PC-9 (cell line): ENCODE measurements at regions of chr7 and their contacts with region 1.

Region 1: DNA sequence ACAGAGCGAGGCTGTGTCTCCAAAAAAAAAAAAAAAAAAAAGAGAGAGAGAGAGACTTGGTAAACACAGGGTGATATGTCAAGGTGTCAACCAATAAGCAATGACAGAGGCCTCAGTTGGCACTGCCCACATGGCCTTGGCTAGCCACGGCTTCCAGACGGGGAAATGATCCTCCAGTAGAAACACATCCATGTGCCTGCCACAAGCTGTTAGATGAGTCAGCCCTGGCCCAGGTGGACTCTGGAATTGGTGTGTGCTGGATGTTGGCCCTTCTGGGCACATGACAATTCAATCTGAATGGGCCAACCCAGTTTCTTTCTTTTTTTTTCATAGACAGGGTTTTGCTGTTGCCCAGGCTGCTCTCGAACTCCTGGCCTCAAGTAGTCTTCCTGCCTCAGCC is 13.7 kb downstream of the RFC2 start:
- DNase-seq: no peak
- H3K4me3 ChIP-seq: no peak overlapping the region
- H3K27ac ChIP-seq: no peak overlapping the region
- H3K4me1 ChIP-seq: no peaks in the 10 kb centered on the region
- H3K27me3 ChIP-seq: no peaks in the 10 kb centered on the region
- CTCF ChIP-seq: no peak

Region 2: GRCh38 chr7:74061840-74062539 is 178.5 kb before region 1 on chr7:
- CTCF ChIA-PET with region 1: no interaction called
- POLR2A ChIA-PET with region 1: no interaction called
- intact Hi-C with region 1: no loop called
- DNase-seq: peak; percentile 64 to 90
- H3K4me3 ChIP-seq: no peak overlapping the region
- H3K27ac ChIP-seq: no peak overlapping the region
- H3K4me1 ChIP-seq: peaks cover 17% of the 10 kb centered on the region
- H3K27me3 ChIP-seq: 0 out of 2 replicates have a peak, but pooled peaks cover 2% of the 10 kb centered on the region
- CTCF ChIP-seq: no peak

Region 3: DNA sequence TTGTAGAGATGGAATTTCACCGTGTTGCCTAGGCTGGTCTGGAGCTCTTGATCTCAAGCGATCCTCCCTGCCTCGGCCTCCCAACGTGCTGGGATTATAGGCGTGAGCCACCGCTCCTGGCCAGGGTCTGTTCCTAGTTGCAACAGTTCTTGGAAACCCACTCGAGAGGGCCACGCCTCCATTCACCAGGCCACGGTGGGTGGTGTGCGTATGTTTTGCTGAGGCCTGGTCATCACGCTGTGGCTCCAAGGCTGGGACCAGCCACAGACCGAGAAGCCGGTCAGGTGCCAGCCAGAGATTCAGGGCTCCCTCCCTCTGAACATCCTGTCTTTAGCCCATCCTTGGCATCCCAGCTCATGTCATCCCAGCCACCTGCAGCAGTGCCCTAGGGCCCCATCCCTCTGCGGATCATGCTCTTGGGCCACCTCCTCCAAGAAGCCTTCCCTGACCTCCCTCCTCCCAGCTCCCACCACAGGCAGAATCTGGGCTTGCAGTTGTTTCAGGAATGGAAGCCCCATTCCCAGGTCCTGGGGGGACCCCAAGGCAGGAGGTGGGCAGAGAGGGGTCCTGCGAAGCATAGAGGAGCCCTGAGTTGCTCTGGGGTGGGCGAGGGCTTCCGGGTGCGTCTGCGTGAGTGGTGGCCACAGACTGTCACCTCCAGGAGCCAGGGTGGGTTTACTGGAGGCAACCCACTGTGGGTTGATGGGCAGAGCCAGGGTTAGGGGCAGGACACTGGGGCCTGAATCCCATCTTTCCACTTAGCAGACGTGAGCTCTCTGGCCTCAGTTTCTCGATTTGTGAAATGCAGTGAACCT is 25.5 kb before region 1 on chr7:
- CTCF ChIA-PET with region 1: no interaction called
- POLR2A ChIA-PET with region 1: interaction called, 24 read pairs
- intact Hi-C with region 1: no loop called
- DNase-seq: no peak
- H3K4me3 ChIP-seq: no peak overlapping the region
- H3K27ac ChIP-seq: no peak overlapping the region
- H3K4me1 ChIP-seq: peaks cover 5% of the 10 kb centered on the region
- H3K27me3 ChIP-seq: no peaks in the 10 kb centered on the region
- CTCF ChIP-seq: no peak

Region 4: DNA sequence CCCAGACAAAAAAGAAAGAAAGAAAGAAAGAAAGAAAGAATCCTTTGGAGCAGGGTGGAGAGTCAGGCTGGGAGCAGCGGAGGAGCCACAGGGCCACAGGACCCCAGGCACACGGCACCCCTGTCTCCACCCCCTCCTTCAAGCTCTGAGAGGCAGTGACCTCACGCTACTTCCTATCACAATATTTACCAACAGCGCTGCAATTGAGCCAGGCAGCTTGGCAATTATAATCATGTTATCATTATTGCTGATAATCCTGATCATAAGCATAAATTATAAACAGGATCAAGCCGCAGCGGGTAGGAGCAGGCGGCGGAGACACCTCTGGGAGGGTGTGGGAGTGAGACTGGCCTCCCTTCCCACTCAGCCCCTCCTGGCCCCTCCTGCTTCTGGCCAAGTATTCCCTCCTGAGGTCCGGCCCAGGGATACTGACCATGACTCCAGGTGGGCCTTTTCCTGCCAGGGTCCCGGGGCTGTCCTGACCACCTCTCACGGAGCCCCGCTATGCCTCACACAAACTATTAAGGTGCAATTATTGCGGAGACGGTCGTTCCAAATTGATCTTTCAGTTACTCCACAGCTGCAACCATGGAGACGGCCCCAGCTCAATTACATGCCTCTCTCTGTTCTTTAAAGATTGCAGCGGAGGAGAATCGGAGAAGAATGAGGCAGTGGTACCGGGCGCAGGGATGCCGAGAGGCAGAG is 203.2 kb after region 1 on chr7:
- CTCF ChIA-PET with region 1: no interaction called
- POLR2A ChIA-PET with region 1: no interaction called
- intact Hi-C with region 1: no loop called
- DNase-seq: no peak
- H3K4me3 ChIP-seq: no peak overlapping the region
- H3K27ac ChIP-seq: no peak overlapping the region
- H3K4me1 ChIP-seq: no peaks in the 10 kb centered on the region
- H3K27me3 ChIP-seq: no peaks in the 10 kb centered on the region
- CTCF ChIP-seq: no peak